ENCODE measurements at regions of chr17 and their contacts with region 1.

Region 1: GRCh38 chr17:11240041-11240801 is 792 bp upstream of the SHISA6 start:
- DNase-seq: peak in 6 of 10 donors; percentile 20 to 62 (median 42)
- H3K4me3 ChIP-seq: peak overlapping the region; percentile 14 to 69 (median 53)
- H3K27ac ChIP-seq: peak overlapping the region in 10 of 59 donors; percentile 6 to 55 (median 36)
- H3K27me3 ChIP-seq: peaks cover 0 to 55% (median 27%) of the 10 kb centered on the region in 45 donors
- CTCF ChIP-seq: peak in 47 of 56 donors; percentile 14 to 64 (median 36)

Region 2: DNA sequence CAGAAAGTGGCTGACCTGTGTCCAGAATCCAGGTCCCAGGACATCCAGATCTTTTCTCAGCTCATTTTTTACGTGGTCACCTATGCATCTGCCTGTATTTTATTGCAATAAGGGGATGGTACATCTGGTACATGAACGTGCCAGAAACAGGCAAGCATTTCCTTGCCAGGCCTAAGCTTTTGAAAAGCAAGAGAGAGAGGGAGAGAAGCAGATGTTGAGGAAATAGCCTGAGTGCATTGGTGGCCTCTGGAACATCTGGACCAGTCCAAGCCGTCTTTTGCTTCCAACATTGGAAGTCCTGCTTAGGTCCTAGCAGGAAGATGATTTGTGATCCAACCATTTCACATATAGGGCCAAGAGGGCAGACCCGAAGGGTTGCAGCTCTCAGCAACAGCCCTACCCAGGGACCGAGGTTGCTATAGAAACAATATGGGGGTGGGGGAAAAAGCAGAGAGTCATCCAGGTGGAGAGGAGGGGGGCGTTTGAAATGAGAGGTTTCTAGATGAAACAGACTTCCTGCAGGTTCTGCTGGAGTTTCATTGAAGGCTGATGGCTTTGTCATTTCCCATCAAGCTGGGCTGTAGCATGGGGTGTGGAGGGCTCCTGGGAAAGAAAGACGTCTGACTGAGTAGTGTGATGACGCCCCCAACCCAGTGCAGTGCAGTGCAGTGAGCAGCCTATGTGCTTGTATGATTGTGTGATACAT is 62.3 kb after region 1 on chr17:
- intact Hi-C with region 1: loop called in 1 of 2 experiments (anchors 10 kb)
- DNase-seq: no peak
- H3K4me3 ChIP-seq: no peak overlapping the region
- H3K27ac ChIP-seq: no peak overlapping the region
- H3K27me3 ChIP-seq: peaks cover 0 to 4% (median 0%) of the 10 kb centered on the region in 45 donors
- CTCF ChIP-seq: no peak

Region 3: GRCh38 chr17:11421864-11422263 is 181.6 kb after region 1 on chr17:
- intact Hi-C with region 1: loop called in 1 of 2 experiments (anchors 10 kb)
- DNase-seq: no peak
- H3K4me3 ChIP-seq: no peak overlapping the region
- H3K27ac ChIP-seq: no peak overlapping the region
- H3K27me3 ChIP-seq: no peaks in the 10 kb centered on the region
- CTCF ChIP-seq: no peak

Region 4: GRCh38 chr17:11644261-11645212 is 404.3 kb after region 1 on chr17:
- intact Hi-C with region 1: loop called in 1 of 2 experiments (anchors 5 kb)
- DNase-seq: peak in 9 of 10 donors; percentile 30 to 81 (median 61)
- H3K4me3 ChIP-seq: peak overlapping the region in 47 of 59 donors; percentile 1 to 62 (median 36)
- H3K27ac ChIP-seq: no peak overlapping the region
- H3K27me3 ChIP-seq: no peaks in the 10 kb centered on the region
- CTCF ChIP-seq: peak; percentile 75 to 97 (median 87)

Region 5: GRCh38 chr17:11742886-11743285 is 502.7 kb after region 1 on chr17:
- intact Hi-C with region 1: loop called in 1 of 2 experiments (anchors 10 kb)
- DNase-seq: peak in 1 of 10 donors; percentile 24
- H3K4me3 ChIP-seq: no peak overlapping the region
- H3K27ac ChIP-seq: no peak overlapping the region
- H3K27me3 ChIP-seq: no peaks in the 10 kb centered on the region
- CTCF ChIP-seq: peak in 26 of 56 donors; percentile 14 to 57 (median 28)